CD4-positive, alpha-beta memory T cell (primary cell): ENCODE measurements at regions of chr7 and their contacts with region 1.

Region 1: DNA sequence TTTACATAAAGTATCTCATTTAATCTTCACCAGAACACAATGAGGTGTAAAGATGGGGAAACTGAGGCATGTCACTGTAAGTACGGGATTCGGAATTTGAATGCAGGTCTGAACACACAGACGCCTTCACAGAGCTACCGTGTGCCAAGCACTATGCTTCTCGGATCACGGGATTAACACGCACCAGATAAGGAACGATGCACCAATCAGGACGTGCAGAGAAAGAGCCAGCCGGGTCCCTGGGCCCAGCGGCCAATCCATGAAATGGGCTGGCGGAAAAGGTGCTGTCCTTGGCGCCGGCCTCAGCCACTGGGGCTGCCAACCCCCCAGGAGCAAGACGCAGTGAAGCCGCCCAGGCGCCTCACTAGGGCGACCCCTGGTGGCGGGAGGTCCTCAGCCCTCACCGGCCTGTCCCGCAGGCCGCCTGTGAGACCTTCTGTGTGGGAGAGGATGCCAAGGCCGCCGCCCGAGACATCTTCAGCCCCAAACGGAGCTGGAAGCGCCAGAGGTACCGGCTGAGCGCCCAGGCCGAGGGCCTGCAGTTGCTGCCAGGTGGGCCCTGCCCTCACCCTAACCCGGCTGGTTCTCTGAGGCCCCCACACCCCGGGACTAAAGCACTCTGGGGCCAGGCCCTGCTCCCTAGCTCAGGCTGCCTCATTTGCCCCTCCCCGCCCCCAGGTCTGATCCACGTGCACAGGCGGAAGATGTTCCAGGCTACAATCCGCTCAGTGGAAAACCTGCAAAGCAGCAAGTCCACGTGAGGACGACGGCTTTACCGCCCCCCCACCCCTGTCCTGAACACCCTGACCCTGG is 15.6 kb downstream of the ATG9B start:
- DNase-seq: peak; percentile 68 to 82 (median 74)
- H3K4me3 ChIP-seq: peak overlapping the region; percentile 17 to 53
- H3K4me3 Mint-ChIP-seq: peak overlapping the region; percentile 80 to 90 (median 88)
- H3K27ac ChIP-seq: peak overlapping the region; percentile 69
- H3K27ac Mint-ChIP-seq: peak overlapping the region; percentile 87 to 98 (median 96)
- H3K4me1 ChIP-seq: peaks cover 74% of the 10 kb centered on the region
- H3K4me1 Mint-ChIP-seq: peaks cover 39 to 81% (median 59%) of the 10 kb centered on the region in 4 donors
- H3K27me3 ChIP-seq: no peaks in the 10 kb centered on the region
- H3K27me3 Mint-ChIP-seq: no peaks in the 10 kb centered on the region

Region 2: DNA sequence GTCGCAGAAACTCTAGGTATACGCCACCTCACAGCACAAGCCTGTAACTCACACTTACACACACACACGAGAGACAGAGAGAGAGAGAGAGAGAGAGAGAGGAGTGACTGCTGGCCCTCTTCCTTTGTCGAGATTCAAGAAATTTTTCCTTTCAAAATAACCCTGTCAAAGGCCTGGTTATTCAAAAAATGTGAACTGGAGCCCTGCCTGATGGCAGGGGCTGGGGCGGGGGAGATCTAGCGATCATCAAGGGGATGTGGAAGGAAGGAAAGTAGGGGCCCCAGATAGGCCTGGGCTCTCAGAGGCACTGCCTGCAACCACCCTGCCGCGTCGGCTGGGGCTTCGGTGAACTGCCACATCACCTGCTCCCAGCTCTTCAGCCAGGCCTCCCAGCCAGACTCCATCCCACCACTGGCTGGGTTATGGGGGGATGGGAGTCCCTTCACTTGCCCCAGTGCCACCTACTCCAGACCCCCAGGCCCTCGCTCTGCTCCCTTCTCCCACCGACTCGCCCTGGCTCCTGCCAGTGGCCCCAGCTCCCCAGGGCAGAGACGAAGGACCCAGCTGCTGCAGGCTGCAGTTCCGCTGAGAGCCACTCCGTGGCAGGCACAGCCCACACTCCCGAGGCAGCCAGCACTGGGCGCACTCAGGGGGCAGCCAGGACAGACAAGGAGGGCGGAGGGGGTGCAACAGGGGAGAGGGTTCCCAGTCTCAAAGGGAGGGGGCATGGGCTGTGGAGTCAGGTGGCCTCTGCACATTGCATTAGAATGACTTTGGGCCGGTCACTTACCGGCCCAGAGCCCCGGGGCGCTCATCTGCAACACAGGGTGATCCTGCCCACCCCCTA is 45.9 kb before region 1 on chr7:
- CTCF ChIA-PET with region 1: interaction called, 16 read pairs
- POLR2A ChIA-PET with region 1: interaction called, 6 read pairs
- intact Hi-C with region 1: no loop called
- DNase-seq: peak in 4 of 5 donors; percentile 58 to 63 (median 62)
- H3K4me3 ChIP-seq: no peak overlapping the region
- H3K4me3 Mint-ChIP-seq: no peak overlapping the region
- H3K27ac ChIP-seq: no peak overlapping the region
- H3K27ac Mint-ChIP-seq: no peak overlapping the region
- H3K4me1 ChIP-seq: peaks cover 21% of the 10 kb centered on the region
- H3K4me1 Mint-ChIP-seq: peaks cover 6 to 15% (median 9%) of the 10 kb centered on the region in 4 donors
- H3K27me3 ChIP-seq: no peaks in the 10 kb centered on the region
- H3K27me3 Mint-ChIP-seq: peaks cover 12 to 13% of the 10 kb centered on the region in 2 donors

Region 3: DNA sequence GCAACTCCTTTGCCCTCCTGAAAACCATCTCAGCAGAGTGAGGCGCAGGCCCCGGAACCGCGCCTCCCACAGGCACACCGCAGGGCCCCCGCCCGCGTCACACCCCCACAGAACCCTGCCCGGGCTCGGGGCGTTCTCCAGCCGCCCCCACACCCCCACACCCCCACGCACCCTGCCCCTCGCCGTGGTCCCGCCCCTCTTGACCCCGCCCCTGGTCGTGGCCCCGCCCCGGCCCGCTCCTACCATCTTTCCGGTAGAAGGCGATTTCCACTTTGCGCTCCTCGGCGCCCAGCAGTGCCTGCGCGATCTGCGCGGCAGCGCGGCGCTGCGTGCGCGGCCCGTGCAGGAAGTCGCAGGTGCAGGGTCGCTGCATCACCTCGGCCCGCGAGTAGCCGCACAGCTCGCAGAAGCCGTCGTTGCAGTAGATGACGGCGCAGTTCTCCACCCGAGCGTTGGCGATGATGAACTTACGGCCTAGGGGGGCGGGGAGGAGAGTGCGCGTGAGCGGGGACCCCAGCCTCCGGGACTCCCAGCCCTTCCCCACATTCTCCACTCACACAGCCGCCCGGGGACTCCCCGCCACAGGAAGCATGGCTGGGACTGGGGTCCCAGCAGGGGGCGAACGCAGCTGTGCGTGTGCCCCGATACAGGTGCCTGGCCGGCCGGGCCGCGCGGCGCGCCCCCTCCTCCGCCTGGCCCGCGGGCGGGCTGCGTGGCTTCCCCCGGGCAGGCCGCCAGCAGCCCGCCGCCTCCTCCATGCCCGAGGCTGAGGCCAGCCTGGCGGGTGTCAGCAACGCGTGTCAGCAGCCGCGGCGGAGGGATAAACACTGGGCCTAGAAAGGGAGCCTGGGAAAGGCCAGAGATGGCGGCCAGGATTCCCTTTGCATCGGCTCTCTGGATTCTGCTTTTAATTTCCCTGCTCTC is 34.0 kb before region 1 on chr7:
- CTCF ChIA-PET with region 1: interaction called, 22 read pairs
- POLR2A ChIA-PET with region 1: interaction called, 38 read pairs
- intact Hi-C with region 1: loop called (anchors 1 kb)
- DNase-seq: peak; percentile 79 to 87 (median 83)
- H3K4me3 ChIP-seq: peak overlapping the region; percentile 36 to 51
- H3K4me3 Mint-ChIP-seq: peak overlapping the region; percentile 83 to 94 (median 88)
- H3K27ac ChIP-seq: peak overlapping the region; percentile 63
- H3K27ac Mint-ChIP-seq: peak overlapping the region; percentile 87 to 97 (median 95)
- H3K4me1 ChIP-seq: peaks cover 46% of the 10 kb centered on the region
- H3K4me1 Mint-ChIP-seq: peaks cover 18 to 54% (median 44%) of the 10 kb centered on the region in 4 donors
- H3K27me3 ChIP-seq: peaks cover 15% of the 10 kb centered on the region
- H3K27me3 Mint-ChIP-seq: peaks cover 6 to 17% of the 10 kb centered on the region in 2 donors

Region 4: DNA sequence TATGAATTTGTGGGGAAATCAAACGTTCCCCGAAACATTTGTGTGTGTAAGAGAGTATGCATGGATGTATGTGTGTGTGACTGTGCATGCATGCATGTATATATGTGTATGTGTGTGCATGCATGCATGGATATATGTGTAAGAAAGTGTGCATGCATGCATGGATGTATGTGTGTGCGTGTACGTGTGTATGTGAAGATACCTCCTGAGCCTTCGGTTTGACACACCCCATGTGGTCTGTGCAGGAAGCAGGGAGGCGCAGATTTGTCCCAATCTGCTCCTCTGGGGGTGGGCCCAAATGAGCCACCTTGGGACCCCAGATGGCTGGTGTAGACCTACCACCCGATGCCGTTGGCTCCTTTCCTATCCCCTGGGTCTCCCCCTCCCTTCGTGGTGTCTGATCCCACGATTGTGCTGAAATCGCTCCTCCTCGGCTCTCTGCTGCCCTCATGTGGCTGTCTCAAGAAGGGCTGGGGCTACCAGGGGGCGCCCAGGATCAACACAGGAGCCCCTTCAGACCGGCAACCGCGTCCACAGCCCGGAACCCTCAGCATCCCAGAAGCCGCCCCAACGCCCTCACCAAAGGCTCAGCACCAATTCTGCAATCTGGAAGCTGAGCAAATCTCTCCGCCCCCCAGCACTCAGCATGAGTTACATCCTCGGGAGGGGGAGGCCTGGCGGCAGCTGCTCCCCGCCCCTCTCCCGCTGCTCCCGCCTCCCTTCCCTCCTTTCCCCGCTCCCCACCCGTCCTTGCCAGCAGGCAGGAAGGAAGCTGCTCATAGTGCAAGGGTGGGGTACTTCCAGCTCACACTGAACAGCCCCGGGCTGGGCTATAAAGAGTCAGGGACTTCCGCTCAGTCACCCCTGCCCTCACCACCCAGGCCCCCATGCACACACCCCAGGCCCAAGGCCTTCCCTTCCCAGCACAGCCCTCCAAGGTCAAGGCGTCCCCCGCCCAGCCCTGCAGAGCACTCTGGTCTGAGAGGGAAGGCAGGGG is 20.2 kb before region 1 on chr7:
- CTCF ChIA-PET with region 1: interaction called, 98 read pairs
- POLR2A ChIA-PET with region 1: interaction called, 68 read pairs
- intact Hi-C with region 1: no loop called
- DNase-seq: peak; percentile 53 to 72 (median 70)
- H3K4me3 ChIP-seq: peak overlapping the region in 1 of 2 donors; percentile 47
- H3K4me3 Mint-ChIP-seq: peak overlapping the region; percentile 55 to 85 (median 75)
- H3K27ac ChIP-seq: no peak overlapping the region
- H3K27ac Mint-ChIP-seq: peak overlapping the region; percentile 23 to 95 (median 83)
- H3K4me1 ChIP-seq: peaks cover 35% of the 10 kb centered on the region
- H3K4me1 Mint-ChIP-seq: peaks cover 18 to 50% (median 31%) of the 10 kb centered on the region in 4 donors
- H3K27me3 ChIP-seq: no peaks in the 10 kb centered on the region
- H3K27me3 Mint-ChIP-seq: no peaks in the 10 kb centered on the region

Region 5: GRCh38 chr7:150994141-150994964 is 14.4 kb before region 1 on chr7:
- CTCF ChIA-PET with region 1: interaction called, 98 read pairs
- POLR2A ChIA-PET with region 1: interaction called, 68 read pairs
- intact Hi-C with region 1: no loop called
- DNase-seq: peak in 1 of 5 donors; percentile 32
- H3K4me3 ChIP-seq: peak overlapping the region in 1 of 2 donors; percentile 36
- H3K4me3 Mint-ChIP-seq: peak overlapping the region; percentile 26 to 61 (median 46)
- H3K27ac ChIP-seq: peak overlapping the region; percentile 7
- H3K27ac Mint-ChIP-seq: peak overlapping the region in 6 of 7 donors; percentile 29 to 85 (median 69)
- H3K4me1 ChIP-seq: peaks cover 43% of the 10 kb centered on the region
- H3K4me1 Mint-ChIP-seq: peaks cover 17 to 52% (median 38%) of the 10 kb centered on the region in 4 donors
- H3K27me3 ChIP-seq: no peaks in the 10 kb centered on the region
- H3K27me3 Mint-ChIP-seq: no peaks in the 10 kb centered on the region

Region 6: GRCh38 chr7:151080522-151081169 is 71.9 kb after region 1 on chr7 and contains the start of gene FASTK:
- CTCF ChIA-PET with region 1: no interaction called
- POLR2A ChIA-PET with region 1: interaction called, 15 read pairs
- intact Hi-C with region 1: no loop called
- DNase-seq: peak; percentile 86 to 92 (median 89)
- H3K4me3 ChIP-seq: peak within 1 kb of the TSS; percentile 91 to 93
- H3K4me3 Mint-ChIP-seq: peak within 1 kb of the TSS; percentile 85 to 92 (median 89)
- H3K27ac ChIP-seq: peak within 1 kb of the TSS; percentile 90
- H3K27ac Mint-ChIP-seq: peak within 1 kb of the TSS; percentile 72 to 97 (median 91)
- H3K4me1 ChIP-seq: peaks cover 52% of the 10 kb centered on the region
- H3K4me1 Mint-ChIP-seq: peaks cover 23 to 57% (median 36%) of the 10 kb centered on the region in 4 donors
- H3K27me3 ChIP-seq: no peaks in the 10 kb centered on the region
- H3K27me3 Mint-ChIP-seq: no peaks in the 10 kb centered on the region
- total RNA-seq, gene FASTK: 123 to 126 TPM

Region 7: GRCh38 chr7:151439855-151440798 is 431.4 kb after region 1 on chr7 and contains the start of gene CRYGN:
- CTCF ChIA-PET with region 1: no interaction called
- POLR2A ChIA-PET with region 1: no interaction called
- intact Hi-C with region 1: no loop called
- DNase-seq: peak in 2 of 5 donors; percentile 13 to 31
- H3K4me3 ChIP-seq: peak within 1 kb of the TSS in 1 of 2 donors; percentile 28
- H3K4me3 Mint-ChIP-seq: peak within 1 kb of the TSS; percentile 59 to 79 (median 70)
- H3K27ac ChIP-seq: peak within 1 kb of the TSS; percentile 20
- H3K27ac Mint-ChIP-seq: peak within 1 kb of the TSS in 6 of 7 donors; percentile 42 to 93 (median 76)
- H3K4me1 ChIP-seq: peaks cover 31% of the 10 kb centered on the region
- H3K4me1 Mint-ChIP-seq: peaks cover 13 to 43% (median 23%) of the 10 kb centered on the region in 4 donors
- H3K27me3 ChIP-seq: no peaks in the 10 kb centered on the region
- H3K27me3 Mint-ChIP-seq: no peaks in the 10 kb centered on the region
- total RNA-seq, gene CRYGN: not detected